Breast epithelium (tissue), 4 donors: ENCODE measurements at regions of chr11 and their contacts with region 1.

Region 1: GRCh38 chr11:19615341-19616183 is 97.1 kb upstream of the NAV2 start:
- DNase-seq: no peak
- H3K4me3 ChIP-seq: no peak overlapping the region
- H3K27ac ChIP-seq: no peak overlapping the region
- H3K4me1 ChIP-seq: no peaks in the 10 kb centered on the region
- H3K27me3 ChIP-seq: no peaks in the 10 kb centered on the region
- CTCF ChIP-seq: no peak
- POLR2A ChIP-seq: no peak

Region 2: GRCh38 chr11:19651653-19652052 is 36.1 kb after region 1 on chr11:
- intact Hi-C with region 1: loop called (anchors 2 kb)
- DNase-seq: no peak
- H3K4me3 ChIP-seq: no peak overlapping the region
- H3K27ac ChIP-seq: no peak overlapping the region
- H3K4me1 ChIP-seq: no peaks in the 10 kb centered on the region
- H3K27me3 ChIP-seq: no peaks in the 10 kb centered on the region
- CTCF ChIP-seq: no peak
- POLR2A ChIP-seq: no peak

Region 3: DNA sequence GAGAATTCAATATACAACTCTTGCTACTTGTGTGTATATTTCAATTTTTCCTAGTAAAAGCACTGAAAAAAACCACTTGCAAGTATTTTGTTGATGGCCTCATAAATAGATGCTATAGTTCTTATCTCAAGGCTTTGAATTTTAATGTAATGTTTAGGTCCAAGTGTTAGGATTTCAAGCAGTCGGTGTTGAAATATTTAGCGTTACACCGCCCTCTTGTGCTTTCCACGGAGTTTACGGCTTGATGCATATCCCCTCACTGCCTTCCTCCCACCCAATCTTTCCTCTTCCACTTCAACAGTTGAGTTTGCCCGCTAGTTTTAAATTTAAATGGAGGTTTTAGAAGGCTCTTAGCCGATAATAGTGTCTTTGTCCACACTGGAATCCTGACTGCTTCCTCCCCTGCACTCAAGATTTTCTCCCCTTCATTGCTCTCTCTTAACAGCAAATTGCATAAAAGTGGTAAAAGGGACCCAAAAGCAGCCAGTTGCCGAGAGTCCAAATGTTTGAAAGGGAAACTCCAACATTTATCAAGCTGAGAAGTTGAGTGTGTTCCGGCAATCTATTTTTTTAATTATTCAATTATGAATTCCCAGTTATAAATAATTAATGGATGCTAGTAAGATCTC is 722.1 kb after region 1 on chr11:
- intact Hi-C with region 1: loop called (anchors 5 kb)
- DNase-seq: no peak
- H3K4me3 ChIP-seq: no peak overlapping the region
- H3K27ac ChIP-seq: no peak overlapping the region
- H3K4me1 ChIP-seq: no peaks in the 10 kb centered on the region
- H3K27me3 ChIP-seq: peaks cover 0 to 22% of the 10 kb centered on the region in 2 donors
- CTCF ChIP-seq: no peak
- POLR2A ChIP-seq: no peak